Posterior cingulate gyrus (tissue), 11 donors: ENCODE measurements at regions of chr1 and their contacts with region 1.

Region 1: DNA sequence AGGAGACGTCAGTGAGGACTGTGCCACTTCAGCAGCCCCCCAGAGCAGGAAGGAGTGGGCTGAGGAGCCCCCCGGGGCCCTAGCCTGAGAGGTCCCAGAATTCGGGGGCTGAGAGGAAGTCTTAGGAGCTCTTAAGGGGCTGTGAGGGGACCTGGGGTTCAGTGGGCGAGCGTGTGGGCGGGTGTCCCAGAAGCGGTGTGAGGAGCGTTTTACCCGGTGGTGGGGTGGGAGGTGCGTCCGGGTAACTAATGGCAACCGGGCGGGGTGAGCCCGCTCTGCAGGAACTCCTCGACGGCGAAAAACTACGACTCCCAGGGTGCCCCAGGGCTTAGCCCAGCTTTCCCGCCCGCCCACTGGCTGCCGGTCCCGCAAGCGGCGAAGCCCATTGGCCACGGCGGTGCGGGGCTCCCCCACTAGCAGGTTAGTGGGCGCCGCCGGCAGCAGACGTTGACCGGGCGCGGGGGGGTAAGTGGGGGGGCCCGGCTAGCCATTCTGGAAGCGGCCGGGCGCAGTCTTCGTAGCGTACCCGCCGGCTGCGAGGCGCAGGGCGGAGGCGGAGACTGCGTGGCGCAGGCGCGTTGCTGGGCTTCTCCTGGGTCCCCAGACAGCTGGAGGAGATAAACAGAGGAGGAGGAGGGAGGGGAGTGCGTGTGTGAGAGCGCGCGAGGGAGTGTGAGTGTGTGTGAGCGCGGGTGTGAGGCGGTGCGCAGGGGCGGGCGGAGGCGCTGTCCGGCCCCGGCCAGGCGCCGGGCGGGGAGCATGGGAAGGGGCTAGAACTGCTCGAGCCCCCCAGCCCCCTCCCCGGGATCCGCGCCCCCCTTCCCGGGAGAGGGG is at the start of gene WDTC1:
- DNase-seq: peak; percentile 94 to 100 (median 99)

Region 2: GRCh38 chr1:27154991-27155781 is 79.1 kb before region 1 on chr1 and contains the start of gene SLC9A1:
- intact Hi-C with region 1: loop called (anchors 5 kb)
- DNase-seq: peak; percentile 92 to 99 (median 96)

Region 3: DNA sequence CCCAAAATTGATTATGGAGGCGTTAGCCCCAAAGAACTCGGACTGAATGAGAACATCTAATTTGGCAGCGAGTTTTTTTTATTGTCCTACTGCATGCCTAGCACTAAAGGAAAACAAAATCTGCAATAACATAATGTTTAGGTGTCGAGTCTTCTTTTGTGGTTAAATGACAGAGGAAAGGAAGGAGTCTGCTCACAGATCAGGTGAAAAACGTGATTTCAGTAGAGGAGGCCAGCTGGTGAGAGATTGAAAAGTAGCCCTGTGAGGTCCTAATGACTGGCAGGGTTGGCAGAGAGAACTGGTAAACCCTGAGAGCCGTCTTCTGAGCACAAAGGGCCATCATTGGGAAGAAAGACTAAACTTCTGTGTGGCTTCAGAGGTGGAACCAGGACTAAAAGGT is 24.3 kb after region 1 on chr1:
- intact Hi-C with region 1: no loop called
- DNase-seq: no peak

Region 4: DNA sequence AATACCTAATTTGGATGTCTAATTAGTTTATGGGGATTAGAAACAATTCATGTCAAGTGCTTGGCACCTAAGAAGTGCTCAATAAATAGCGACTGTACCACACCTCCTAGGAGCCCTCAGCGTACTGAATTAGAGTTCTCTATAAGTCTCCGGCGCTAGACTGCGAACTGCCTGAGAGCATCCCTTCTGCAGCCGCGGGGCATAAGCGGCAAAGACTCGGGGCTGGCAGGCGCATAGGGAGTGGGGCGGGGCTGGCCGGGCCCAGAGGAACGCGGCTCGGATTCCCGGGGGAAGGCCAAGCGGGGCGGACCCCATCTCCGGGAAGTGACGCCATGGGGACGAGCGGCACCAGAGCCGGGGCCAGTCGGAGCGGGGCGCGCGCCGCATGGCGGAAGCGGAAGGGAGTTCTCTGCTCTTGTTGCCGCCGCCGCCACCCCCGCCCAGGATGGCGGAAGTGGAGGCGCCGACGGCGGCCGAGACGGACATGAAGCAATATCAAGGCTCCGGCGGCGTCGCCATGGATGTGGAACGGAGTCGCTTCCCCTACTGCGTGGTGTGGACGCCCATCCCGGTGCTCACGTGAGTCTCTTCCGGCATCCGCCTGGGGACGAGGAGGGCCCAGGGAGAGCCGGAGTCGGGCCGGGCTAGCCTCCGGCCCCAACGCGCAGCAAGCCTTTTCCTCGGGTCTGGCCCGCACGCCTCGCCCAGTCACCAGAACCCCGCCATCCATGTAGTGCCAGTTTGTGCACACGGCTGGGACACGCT is 87.7 kb after region 1 on chr1 and contains the start of gene TMEM222:
- intact Hi-C with region 1: loop called (anchors 2 kb)
- DNase-seq: peak; percentile 98 to 100 (median 99)